Left lung (tissue), 14 donors: ENCODE measurements at regions of chr17 and their contacts with region 1.

Region 1: GRCh38 chr17:47229535-47230443 is 20.6 kb downstream of the MYL4 start:
- DNase-seq: peak in 3 of 4 donors; percentile 78 to 90 (median 85)
- ATAC-seq: peak; percentile 94
- H3K4me3 ChIP-seq: no peak overlapping the region
- H3K27ac ChIP-seq: peak overlapping the region in 1 of 2 donors; percentile 5
- H3K4me1 ChIP-seq: peaks cover 17 to 34% of the 10 kb centered on the region in 2 donors
- H3K27me3 ChIP-seq: no peaks in the 10 kb centered on the region
- CTCF ChIP-seq: peak; percentile 87 to 97

Region 2: GRCh38 chr17:46889992-46890564 is 339.7 kb before region 1 on chr17:
- intact Hi-C with region 1: no loop called
- DNase-seq: no peak
- ATAC-seq: peak; percentile 57
- H3K4me3 ChIP-seq: no peak overlapping the region
- H3K27ac ChIP-seq: no peak overlapping the region
- H3K4me1 ChIP-seq: peaks cover 0 to 6% of the 10 kb centered on the region in 2 donors
- H3K27me3 ChIP-seq: peaks cover 4 to 27% of the 10 kb centered on the region in 2 donors
- CTCF ChIP-seq: no peak

Region 3: DNA sequence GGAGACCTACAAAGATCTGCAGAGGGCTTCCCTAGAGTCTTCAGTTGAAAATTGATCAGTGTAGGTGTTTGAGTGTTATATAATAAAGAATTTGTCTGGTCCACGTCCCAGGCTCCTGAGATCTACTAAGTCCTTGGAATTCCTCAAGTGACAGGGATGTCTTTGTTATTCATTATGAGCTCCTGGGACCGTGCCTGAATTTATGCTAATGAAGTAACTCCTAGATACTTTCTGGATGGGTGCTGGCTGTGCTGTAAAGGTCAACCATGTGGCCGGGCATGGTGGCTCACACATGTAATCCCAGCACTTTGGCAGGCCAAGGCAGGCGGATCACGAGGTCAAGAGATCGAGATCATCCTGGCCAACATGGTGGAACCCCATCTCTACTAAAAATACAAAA is 84.4 kb before region 1 on chr17:
- intact Hi-C with region 1: no loop called
- DNase-seq: no peak
- ATAC-seq: no peak
- H3K4me3 ChIP-seq: no peak overlapping the region
- H3K27ac ChIP-seq: no peak overlapping the region
- H3K4me1 ChIP-seq: no peaks in the 10 kb centered on the region
- H3K27me3 ChIP-seq: no peaks in the 10 kb centered on the region
- CTCF ChIP-seq: no peak

Region 4: DNA sequence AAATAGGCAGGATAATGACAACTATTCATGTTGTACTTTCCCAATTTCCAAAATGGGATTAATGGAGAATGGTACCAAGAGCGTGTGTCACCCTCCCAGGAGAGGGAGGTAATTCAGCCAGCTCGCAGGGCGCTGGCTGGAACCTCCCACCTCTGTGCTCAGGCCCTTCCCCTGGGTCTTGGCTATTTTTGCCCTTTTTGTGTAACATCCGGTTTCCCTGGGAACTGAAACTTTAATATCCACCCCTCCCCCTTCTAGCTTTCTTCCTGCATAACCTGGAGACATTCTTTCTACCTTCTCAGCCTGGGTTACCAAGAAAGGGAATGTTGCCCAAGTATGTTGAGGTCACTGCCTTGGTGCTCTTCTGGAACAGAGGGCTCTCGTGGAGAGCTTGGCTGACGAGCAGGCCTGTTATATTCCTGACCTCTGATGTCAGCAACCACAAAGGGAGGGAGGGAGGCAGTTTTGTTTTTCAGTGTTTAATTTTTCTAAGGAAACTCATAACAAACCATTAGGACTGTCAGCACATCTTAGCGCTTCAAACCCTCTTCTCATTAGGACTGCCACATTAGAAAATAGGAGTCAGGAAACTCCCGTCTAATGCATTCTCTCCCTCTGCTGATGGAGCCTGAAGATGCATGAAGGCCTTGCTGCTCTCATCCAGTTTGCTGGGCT is 49.4 kb after region 1 on chr17:
- intact Hi-C with region 1: no loop called
- DNase-seq: peak in 3 of 4 donors; percentile 25 to 77 (median 63)
- ATAC-seq: peak; percentile 84
- H3K4me3 ChIP-seq: no peak overlapping the region
- H3K27ac ChIP-seq: peak overlapping the region; percentile 77 to 88
- H3K4me1 ChIP-seq: peaks cover 45 to 69% of the 10 kb centered on the region in 2 donors
- H3K27me3 ChIP-seq: no peaks in the 10 kb centered on the region
- CTCF ChIP-seq: no peak

Region 5: DNA sequence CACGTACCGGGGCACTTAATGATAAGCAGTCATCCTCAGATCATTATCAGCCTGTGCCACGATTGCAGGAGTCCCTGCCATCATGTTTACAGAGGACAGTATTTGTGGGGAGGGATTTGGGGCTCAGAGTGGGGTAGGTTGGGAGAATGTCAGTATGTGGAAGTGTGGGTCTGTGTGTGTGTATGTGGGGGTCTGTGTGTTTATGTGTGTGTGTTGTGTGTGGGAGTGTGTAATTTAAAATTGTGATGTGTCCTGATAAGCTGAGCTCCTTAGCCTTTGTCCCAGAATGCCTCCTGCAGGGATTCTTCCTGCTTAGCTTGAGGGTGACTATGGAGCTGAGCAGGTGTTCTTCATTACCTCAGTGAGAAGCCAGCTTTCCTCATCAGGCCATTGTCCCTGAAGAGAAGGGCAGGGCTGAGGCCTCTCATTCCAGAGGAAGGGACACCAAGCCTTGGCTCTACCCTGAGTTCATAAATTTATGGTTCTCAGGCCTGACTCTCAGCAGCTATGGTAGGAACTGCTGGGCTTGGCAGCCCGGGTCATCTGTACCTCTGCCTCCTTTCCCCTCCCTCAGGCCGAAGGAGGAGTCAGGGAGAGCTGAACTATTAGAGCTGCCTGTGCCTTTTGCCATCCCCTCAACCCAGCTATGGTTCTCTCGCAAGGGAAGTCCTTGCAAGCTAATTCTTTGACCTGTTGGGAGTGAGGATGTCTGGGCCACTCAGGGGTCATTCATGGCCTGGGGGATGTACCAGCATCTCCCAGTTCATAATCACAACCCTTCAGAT is 80.6 kb after region 1 on chr17:
- intact Hi-C with region 1: loop called in 1 of 2 experiments (anchors 5 kb)
- DNase-seq: no peak
- ATAC-seq: no peak
- H3K4me3 ChIP-seq: no peak overlapping the region
- H3K27ac ChIP-seq: no peak overlapping the region
- H3K4me1 ChIP-seq: peaks cover 8 to 17% of the 10 kb centered on the region in 2 donors
- H3K27me3 ChIP-seq: no peaks in the 10 kb centered on the region
- CTCF ChIP-seq: no peak

Region 6: DNA sequence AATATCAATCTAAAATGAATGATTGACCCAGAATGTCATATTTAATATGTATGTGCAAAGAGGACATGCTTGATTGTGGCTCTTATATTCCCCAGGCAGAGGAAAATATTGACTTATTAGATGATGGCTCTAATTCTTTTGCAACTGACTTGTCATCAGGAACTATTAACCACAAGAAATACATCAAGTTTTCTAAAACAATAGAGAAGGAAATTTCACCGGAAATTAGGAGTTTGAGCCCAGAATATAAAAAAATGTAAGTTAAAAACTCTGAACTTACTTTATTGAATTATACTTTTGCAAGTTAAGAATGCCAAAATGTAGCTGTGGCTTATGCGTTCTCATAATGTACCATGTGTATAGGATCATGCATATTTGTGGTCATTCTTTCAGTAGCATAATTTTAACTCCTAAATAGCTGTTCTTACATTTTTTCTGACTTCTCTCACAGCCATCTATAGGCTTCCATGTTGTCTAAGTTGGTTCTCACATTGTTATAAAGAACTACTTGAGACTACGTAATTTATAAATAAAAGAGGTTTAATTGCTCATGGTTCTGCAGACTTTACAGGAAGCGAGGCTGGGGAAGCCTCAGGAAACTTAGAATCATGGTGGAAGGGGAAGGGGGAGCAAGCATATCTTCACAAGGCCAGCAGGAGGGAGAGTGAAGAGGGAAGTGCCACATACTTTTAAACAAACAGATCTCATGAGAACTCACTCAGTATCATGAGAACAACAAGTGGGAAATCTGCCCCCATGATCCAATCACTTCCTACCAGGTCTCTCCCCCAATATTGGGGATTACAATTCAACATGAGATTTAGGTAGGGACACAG is 105.5 kb after region 1 on chr17:
- intact Hi-C with region 1: no loop called
- DNase-seq: no peak
- ATAC-seq: no peak
- H3K4me3 ChIP-seq: no peak overlapping the region
- H3K27ac ChIP-seq: no peak overlapping the region
- H3K4me1 ChIP-seq: no peaks in the 10 kb centered on the region
- H3K27me3 ChIP-seq: no peaks in the 10 kb centered on the region
- CTCF ChIP-seq: no peak